HepG2 (cell line): ENCODE measurements at regions of chr4 and their contacts with region 1.

Region 1: DNA sequence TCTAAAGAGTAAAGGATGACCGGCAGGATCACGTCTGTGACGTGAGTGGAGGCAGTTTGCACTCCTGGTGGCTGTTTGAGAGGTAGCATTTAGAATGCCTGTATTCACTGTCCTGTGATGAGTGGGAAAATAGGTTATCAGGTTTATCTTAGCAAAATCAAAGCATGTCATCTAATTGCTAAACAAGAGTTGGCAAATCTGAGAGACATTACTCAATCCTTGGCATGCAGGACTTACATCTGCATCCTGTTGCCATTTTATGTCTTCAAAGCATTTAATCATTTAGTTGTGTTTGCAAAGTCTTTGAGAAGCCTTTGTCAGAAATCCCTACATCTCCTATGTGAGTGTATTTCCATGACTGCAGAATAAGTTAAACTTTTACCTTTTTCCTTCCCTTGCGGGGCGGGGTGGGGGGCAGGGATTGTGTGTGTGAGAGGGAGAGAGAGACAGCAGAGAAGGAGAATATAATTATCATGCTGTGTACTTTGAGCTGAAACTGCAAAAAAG is 41.4 kb upstream of the MSANTD1 start:
- DNase-seq: peak; percentile 96
- ATAC-seq: peak; percentile 82
- H3K4me3 ChIP-seq: peak overlapping the region in 1 of 3 experiments; percentile 3; a peak in 1 of 6 replicates
- H3K27ac ChIP-seq: peak overlapping the region; percentile 95
- H3K4me1 ChIP-seq: peaks cover 78% of the 10 kb centered on the region
- H3K27me3 ChIP-seq: no peaks in the 10 kb centered on the region
- CTCF ChIP-seq: 0 out of 2 replicates have a peak, but pooled peaks have one; percentile 26
- EP300 ChIP-seq: peak; percentile 44 to 92; a peak in 2 of 4 replicates
- POLR2A ChIP-seq: no peak
- RAD21 ChIP-seq: no peak

Region 2: DNA sequence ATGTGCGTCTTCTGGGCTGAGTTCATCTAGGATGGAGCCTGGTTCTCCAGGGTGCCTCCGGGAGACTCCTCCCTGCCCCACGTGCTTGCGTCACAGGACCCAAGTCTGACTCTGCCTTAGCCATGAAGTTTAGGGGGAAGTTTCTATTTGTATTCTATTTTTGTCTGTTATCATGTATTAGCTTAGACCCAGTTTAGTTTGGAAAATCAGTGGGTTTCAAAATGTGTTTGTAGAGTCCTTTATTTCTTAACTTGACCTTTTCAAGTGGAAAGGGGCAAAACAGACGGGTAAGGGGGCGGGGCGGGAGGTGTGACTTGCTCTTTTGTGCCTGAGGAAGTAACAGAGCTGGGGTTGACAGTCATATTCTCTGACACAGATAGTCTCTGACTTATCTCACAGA is 47.1 kb before region 1 on chr4:
- CTCF ChIA-PET with region 1: no interaction called
- POLR2A ChIA-PET with region 1: no interaction called
- in situ Hi-C with region 1: no loop called
- intact Hi-C with region 1: no loop called
- DNase-seq: no peak
- ATAC-seq: no peak
- H3K4me3 ChIP-seq: no peak overlapping the region
- H3K27ac ChIP-seq: no peak overlapping the region
- H3K4me1 ChIP-seq: no peaks in the 10 kb centered on the region
- H3K27me3 ChIP-seq: no peaks in the 10 kb centered on the region
- CTCF ChIP-seq: no peak
- EP300 ChIP-seq: no peak
- POLR2A ChIP-seq: no peak
- RAD21 ChIP-seq: no peak

Region 3: DNA sequence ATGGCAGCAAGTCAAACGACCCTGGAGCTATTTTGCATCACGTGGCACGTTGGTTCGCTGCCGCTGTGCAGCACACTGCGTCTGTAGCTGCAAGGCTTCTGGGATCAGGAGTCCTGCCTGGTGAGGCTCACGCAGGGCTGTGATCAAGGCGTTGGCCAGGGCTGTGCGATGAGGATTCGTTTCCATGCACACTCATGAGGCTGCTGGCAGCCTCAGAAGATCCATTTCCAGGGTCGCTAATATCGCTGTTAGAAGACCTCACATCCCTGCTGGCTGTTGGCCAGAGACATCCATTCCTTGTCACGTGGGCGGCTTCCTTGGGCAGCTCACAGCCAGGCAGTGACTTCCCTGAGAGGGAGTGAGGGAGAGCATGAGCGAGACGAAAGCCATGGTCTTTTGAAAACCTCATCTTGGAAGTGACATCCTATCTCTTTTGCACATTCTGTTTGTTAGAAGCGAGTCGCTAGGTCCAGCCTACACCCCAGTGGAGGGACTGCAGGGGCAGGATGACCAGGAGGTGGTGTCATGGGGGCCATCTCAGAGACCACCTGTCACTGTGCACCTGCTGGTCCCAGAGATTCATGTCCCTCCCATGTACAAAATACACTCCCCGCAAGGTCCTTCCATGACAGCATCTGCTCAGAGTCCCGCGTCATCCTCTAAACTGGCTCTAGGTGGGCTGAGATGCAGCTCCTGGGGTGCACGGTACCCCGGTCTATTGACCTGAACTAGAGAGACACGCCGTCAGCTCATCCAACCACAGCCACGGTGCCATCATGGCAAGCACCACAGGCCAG is 97.4 kb after region 1 on chr4:
- CTCF ChIA-PET with region 1: no interaction called
- POLR2A ChIA-PET with region 1: no interaction called
- in situ Hi-C with region 1: no loop called
- intact Hi-C with region 1: loop called (anchors 5 kb)
- DNase-seq: no peak
- ATAC-seq: no peak
- H3K4me3 ChIP-seq: no peak overlapping the region
- H3K27ac ChIP-seq: no peak overlapping the region
- H3K4me1 ChIP-seq: peaks cover 21% of the 10 kb centered on the region
- H3K27me3 ChIP-seq: no peaks in the 10 kb centered on the region; a peak in 1 of 5 replicates
- CTCF ChIP-seq: no peak
- EP300 ChIP-seq: no peak
- POLR2A ChIP-seq: no peak
- RAD21 ChIP-seq: no peak

Region 4: GRCh38 chr4:3492741-3493719 is 285.4 kb after region 1 on chr4:
- CTCF ChIA-PET with region 1: no interaction called
- POLR2A ChIA-PET with region 1: no interaction called
- in situ Hi-C with region 1: no loop called
- intact Hi-C with region 1: no loop called
- DNase-seq: no peak
- ATAC-seq: no peak
- H3K4me3 ChIP-seq: no peak overlapping the region
- H3K27ac ChIP-seq: no peak overlapping the region
- H3K4me1 ChIP-seq: peaks cover 28% of the 10 kb centered on the region
- H3K27me3 ChIP-seq: peaks cover 18 to 74% of the 10 kb centered on the region in 2 experiments
- CTCF ChIP-seq: no peak
- EP300 ChIP-seq: no peak
- POLR2A ChIP-seq: no peak
- RAD21 ChIP-seq: no peak